ENCODE measurements at regions of chr15 and their contacts with region 1.

Region 1: GRCh38 chr15:75367913-75368688 is at the start of gene MAN2C1:
- DNase-seq: peak; percentile 98 to 99
- ATAC-seq: peak; percentile 90 to 93
- H3K4me3 ChIP-seq: peak within 1 kb of the TSS; percentile 81
- H3K27ac ChIP-seq: peak within 1 kb of the TSS; percentile 93 to 95
- H3K4me1 ChIP-seq: peaks cover 21% of the 10 kb centered on the region
- CTCF ChIP-seq: peak; percentile 95
- EP300 ChIP-seq: no peak
- POLR2A ChIP-seq: peak; percentile 98
- RAD21 ChIP-seq: peak; percentile 73 to 79
- polyA plus RNA-seq, gene MAN2C1: 47.7 and 66.3 TPM in 2 replicates

Region 2: GRCh38 chr15:75307778-75308391 is 60.2 kb before region 1 on chr15:
- CTCF ChIA-PET with region 1: no interaction called
- POLR2A ChIA-PET with region 1: no interaction called
- DNase-seq: peak; percentile 77 to 92
- ATAC-seq: peak; percentile 99 to 100
- H3K4me3 ChIP-seq: no peak overlapping the region
- H3K27ac ChIP-seq: peak overlapping the region in 1 of 2 experiments; percentile 42; a peak in 1 of 6 replicates
- H3K4me1 ChIP-seq: peaks cover 6% of the 10 kb centered on the region; the same call in 2 of the 3 replicates
- CTCF ChIP-seq: peak; percentile 76
- EP300 ChIP-seq: no peak
- POLR2A ChIP-seq: no peak
- RAD21 ChIP-seq: peak; percentile 93 to 96

Region 3: GRCh38 chr15:75353604-75354003 is 14.5 kb before region 1 on chr15:
- CTCF ChIA-PET with region 1: interaction called, 72 read pairs
- POLR2A ChIA-PET with region 1: interaction called, 13 read pairs
- DNase-seq: no peak
- ATAC-seq: no peak; a peak in 1 of 6 replicates
- H3K4me3 ChIP-seq: no peak overlapping the region
- H3K27ac ChIP-seq: no peak overlapping the region
- H3K4me1 ChIP-seq: peaks cover under 1% of the 10 kb centered on the region; the same call in 1 of the 3 replicates
- CTCF ChIP-seq: no peak
- EP300 ChIP-seq: no peak
- POLR2A ChIP-seq: no peak
- RAD21 ChIP-seq: no peak

Region 4: GRCh38 chr15:75397494-75397893 is 29.4 kb after region 1 on chr15:
- CTCF ChIA-PET with region 1: interaction called, 16 read pairs
- POLR2A ChIA-PET with region 1: interaction called, 7 read pairs
- DNase-seq: no peak
- ATAC-seq: no peak
- H3K4me3 ChIP-seq: no peak overlapping the region
- H3K27ac ChIP-seq: no peak overlapping the region
- H3K4me1 ChIP-seq: no peaks in the 10 kb centered on the region
- CTCF ChIP-seq: no peak
- EP300 ChIP-seq: no peak
- POLR2A ChIP-seq: no peak
- RAD21 ChIP-seq: no peak

Region 5: GRCh38 chr15:75578948-75579920 is 211.1 kb after region 1 on chr15 and contains the start of gene PTPN9:
- CTCF ChIA-PET with region 1: interaction called, 16 read pairs
- POLR2A ChIA-PET with region 1: interaction called, 9 read pairs
- DNase-seq: peak; percentile 77 to 82
- ATAC-seq: peak; percentile 88 to 90
- H3K4me3 ChIP-seq: peak within 1 kb of the TSS; percentile 67
- H3K27ac ChIP-seq: peak within 1 kb of the TSS; percentile 96 to 97
- H3K4me1 ChIP-seq: peaks cover 16% of the 10 kb centered on the region
- CTCF ChIP-seq: peak; percentile 65
- EP300 ChIP-seq: no peak
- POLR2A ChIP-seq: peak; percentile 62
- RAD21 ChIP-seq: peak in 1 of 2 experiments; percentile 59; a peak in 3 of 5 replicates
- polyA plus RNA-seq, gene PTPN9: 60.2 and 71.2 TPM in 2 replicates

Region 6: GRCh38 chr15:75647370-75648155 is 279.5 kb after region 1 on chr15 and contains the start of gene SNX33:
- CTCF ChIA-PET with region 1: interaction called, 51 read pairs
- POLR2A ChIA-PET with region 1: interaction called, 66 read pairs
- DNase-seq: peak; percentile 81 to 89
- ATAC-seq: peak; percentile 84 to 90
- H3K4me3 ChIP-seq: peak within 1 kb of the TSS; percentile 75
- H3K27ac ChIP-seq: peak within 1 kb of the TSS; percentile 91 to 94
- H3K4me1 ChIP-seq: peaks cover 41% of the 10 kb centered on the region
- CTCF ChIP-seq: peak; percentile 67
- EP300 ChIP-seq: no peak
- POLR2A ChIP-seq: peak; percentile 83
- RAD21 ChIP-seq: peak in 1 of 2 experiments; percentile 42; a peak in 2 of 5 replicates
- polyA plus RNA-seq, gene SNX33: 8.4 and 10.7 TPM in 2 replicates

Region 7: GRCh38 chr15:75702436-75702835 is 334.3 kb after region 1 on chr15:
- CTCF ChIA-PET with region 1: no interaction called
- POLR2A ChIA-PET with region 1: no interaction called
- DNase-seq: no peak
- ATAC-seq: no peak
- H3K4me3 ChIP-seq: no peak overlapping the region
- H3K27ac ChIP-seq: no peak overlapping the region
- H3K4me1 ChIP-seq: peaks cover 9% of the 10 kb centered on the region; the same call in 2 of the 3 replicates
- CTCF ChIP-seq: no peak
- EP300 ChIP-seq: no peak
- POLR2A ChIP-seq: no peak
- RAD21 ChIP-seq: no peak

Measured in A549 (cell line).